HepG2 (cell line): ENCODE measurements at regions of chr20 and their contacts with region 1.

Region 1: DNA sequence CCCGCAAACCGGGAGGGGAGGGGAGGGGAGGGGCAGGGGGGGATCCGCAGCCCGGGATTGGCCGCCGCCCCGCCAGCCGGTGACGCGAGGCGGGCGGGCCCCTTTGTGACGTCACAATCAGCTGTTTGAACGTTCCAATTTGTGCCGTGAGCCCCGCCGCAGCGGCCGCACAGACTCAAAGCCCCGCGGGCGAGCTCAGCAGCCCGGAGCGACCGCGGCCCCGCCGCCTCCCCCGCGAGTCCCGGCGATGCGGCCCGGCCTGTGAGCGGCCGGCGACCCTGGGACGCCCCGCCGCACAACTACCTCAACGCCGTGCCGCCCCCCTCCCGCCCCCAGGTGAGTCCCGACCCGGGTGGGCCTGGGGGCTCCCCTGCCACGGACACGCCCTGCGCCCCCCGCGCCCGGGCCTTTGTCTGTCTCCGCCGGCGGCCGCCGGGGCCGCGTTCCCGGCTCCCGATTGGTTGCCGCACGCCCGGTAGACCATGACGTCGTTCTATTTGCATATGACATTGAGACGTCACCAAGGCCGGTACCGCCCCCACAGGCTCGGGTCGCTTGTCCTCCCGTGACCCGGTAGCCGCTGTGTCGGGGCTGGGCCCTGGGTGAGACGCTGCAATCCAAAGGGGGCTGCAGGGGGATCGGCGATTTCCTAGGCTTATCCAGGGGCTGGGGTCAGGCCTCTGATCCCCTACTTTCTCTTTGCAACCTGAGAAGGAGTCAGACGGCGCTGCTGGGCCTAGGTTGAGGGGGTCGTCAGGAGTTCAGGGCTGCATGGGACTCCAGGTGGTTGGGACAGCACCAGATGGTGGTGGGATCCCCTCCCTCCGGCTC is at the start of gene TP53INP2:
- DNase-seq: peak; percentile 94
- ATAC-seq: peak; percentile 70
- H3K4me3 ChIP-seq: peak within 1 kb of the TSS; percentile 82 to 98 (median 84)
- H3K27ac ChIP-seq: peak within 1 kb of the TSS; percentile 92
- H3K4me1 ChIP-seq: peaks cover 63% of the 10 kb centered on the region
- H3K27me3 ChIP-seq: no peaks in the 10 kb centered on the region; a peak in 1 of 5 replicates
- CTCF ChIP-seq: no peak
- EP300 ChIP-seq: peak; percentile 22 to 44; a peak in 3 of 4 replicates
- POLR2A ChIP-seq: peak; percentile 66 to 92
- RAD21 ChIP-seq: peak; percentile 39
- total RNA-seq, gene TP53INP2: 5.2 and 10.1 TPM in 2 replicates

Region 2: DNA sequence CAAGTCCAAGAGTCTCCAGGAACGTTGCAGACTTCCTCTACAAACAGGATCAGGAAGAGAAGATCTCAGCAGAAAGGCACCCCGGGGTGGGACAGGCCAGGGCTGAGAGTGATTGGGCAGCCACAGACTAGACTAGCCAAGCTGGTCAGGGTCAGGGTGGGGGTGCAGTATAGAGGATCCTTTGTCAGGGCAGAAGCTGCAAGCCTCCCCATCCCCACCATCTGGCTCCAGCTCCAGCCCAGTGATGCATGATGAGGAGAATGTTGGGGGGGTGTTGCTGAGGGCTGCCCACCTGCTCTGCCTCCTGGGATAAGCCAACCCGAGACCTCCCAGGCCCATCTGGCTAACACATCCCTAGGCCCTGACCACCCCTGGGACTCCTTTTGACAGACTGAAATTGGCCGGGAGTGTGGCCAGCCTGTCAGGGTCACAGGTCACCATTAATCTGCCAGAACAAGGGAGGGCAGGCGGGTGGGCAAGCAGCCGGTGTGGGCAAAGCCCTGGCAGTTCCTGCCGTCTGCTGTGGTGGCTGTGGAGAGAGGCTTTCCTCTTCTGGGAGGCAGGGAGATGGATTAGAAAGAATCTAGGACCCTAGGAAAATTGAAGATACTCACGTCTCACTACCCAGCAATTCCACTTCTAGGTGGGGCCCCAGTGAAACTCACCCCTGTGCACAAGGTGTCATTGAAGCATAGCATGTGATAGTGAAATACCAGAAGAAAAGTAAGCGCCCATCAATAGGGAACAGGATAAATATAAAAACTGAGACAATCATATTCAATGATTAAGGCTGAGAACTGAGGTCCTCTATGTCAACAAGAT is 1238.7 kb before region 1 on chr20:
- CTCF ChIA-PET with region 1: no interaction called
- POLR2A ChIA-PET with region 1: no interaction called
- in situ Hi-C with region 1: no loop called
- intact Hi-C with region 1: no loop called
- DNase-seq: peak; percentile 78
- ATAC-seq: peak; percentile 92
- H3K4me3 ChIP-seq: no peak overlapping the region; a peak in 1 of 6 replicates
- H3K27ac ChIP-seq: no peak overlapping the region
- H3K4me1 ChIP-seq: peaks cover 43% of the 10 kb centered on the region
- H3K27me3 ChIP-seq: peaks cover 0 to 4% of the 10 kb centered on the region in 2 experiments; a peak in 1 of 5 replicates
- CTCF ChIP-seq: no peak
- EP300 ChIP-seq: no peak
- POLR2A ChIP-seq: no peak
- RAD21 ChIP-seq: no peak

Region 3: GRCh38 chr20:34538671-34539123 is 165.7 kb before region 1 on chr20:
- CTCF ChIA-PET with region 1: interaction called, 4 read pairs
- POLR2A ChIA-PET with region 1: interaction called, 3 read pairs
- in situ Hi-C with region 1: no loop called
- intact Hi-C with region 1: loop called (anchors 5 kb)
- DNase-seq: peak; percentile 61
- ATAC-seq: peak; percentile 68
- H3K4me3 ChIP-seq: no peak overlapping the region
- H3K27ac ChIP-seq: no peak overlapping the region
- H3K4me1 ChIP-seq: peaks cover 9% of the 10 kb centered on the region
- H3K27me3 ChIP-seq: no peaks in the 10 kb centered on the region
- CTCF ChIP-seq: peak; percentile 99
- EP300 ChIP-seq: 0 out of 4 replicates have a peak, but pooled peaks of 1 of the 2 experiments have one; percentile 23
- POLR2A ChIP-seq: no peak
- RAD21 ChIP-seq: peak; percentile 82

Region 4: DNA sequence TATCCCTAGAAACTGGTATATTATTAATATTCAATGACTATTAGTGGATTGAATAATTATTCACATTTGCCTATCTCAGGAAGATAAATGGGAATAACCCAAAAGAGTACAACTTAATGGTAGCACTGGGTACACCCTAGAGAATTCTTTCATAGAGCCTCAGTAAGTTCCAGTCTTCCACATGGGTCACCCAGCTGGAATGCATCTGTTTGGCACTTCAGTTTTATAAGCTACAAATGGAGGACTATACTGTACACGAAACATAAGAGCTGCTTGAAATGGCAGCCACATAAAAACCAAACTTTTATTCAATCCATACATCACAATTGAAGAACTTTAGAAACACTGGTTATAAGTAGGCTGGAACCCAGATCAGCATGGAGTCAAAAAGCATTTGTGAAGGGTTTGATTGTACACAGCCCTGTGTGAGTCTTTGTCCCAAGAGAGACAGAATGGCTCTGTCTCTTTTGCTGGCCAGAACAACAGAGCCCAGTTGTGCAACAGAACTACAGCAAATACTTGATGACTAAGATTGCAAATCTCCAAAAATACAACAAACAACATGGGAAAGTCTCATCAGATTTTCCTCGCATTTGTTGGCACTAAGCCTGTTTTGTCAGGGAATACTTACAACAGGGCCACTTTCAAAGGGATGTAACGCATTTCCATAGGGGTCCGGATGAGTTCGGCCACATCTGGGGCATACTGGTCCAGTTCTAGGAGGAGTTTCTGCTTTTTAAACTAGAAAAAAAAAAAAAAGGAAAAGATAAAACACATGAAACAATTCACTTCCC is 67.0 kb before region 1 on chr20:
- CTCF ChIA-PET with region 1: no interaction called
- POLR2A ChIA-PET with region 1: interaction called, 6 read pairs
- in situ Hi-C with region 1: no loop called
- intact Hi-C with region 1: loop called (anchors 5 kb)
- DNase-seq: peak; percentile 90
- ATAC-seq: peak; percentile 85
- H3K4me3 ChIP-seq: no peak overlapping the region
- H3K27ac ChIP-seq: peak overlapping the region; percentile 54
- H3K4me1 ChIP-seq: peaks cover 57% of the 10 kb centered on the region
- H3K27me3 ChIP-seq: no peaks in the 10 kb centered on the region
- CTCF ChIP-seq: no peak
- EP300 ChIP-seq: peak; percentile 69 to 87; a peak in 3 of 4 replicates
- POLR2A ChIP-seq: no peak
- RAD21 ChIP-seq: no peak

Region 5: GRCh38 chr20:34689486-34689885 is 14.9 kb before region 1 on chr20:
- CTCF ChIA-PET with region 1: no interaction called
- POLR2A ChIA-PET with region 1: interaction called, 25 read pairs
- in situ Hi-C with region 1: no loop called
- intact Hi-C with region 1: no loop called
- DNase-seq: no peak
- ATAC-seq: peak; percentile 30; the same call in 1 of the 3 replicates
- H3K4me3 ChIP-seq: no peak overlapping the region
- H3K27ac ChIP-seq: no peak overlapping the region
- H3K4me1 ChIP-seq: peaks cover 18% of the 10 kb centered on the region
- H3K27me3 ChIP-seq: no peaks in the 10 kb centered on the region
- CTCF ChIP-seq: no peak
- EP300 ChIP-seq: peak in 1 of 2 experiments; percentile 38; a peak in 1 of 4 replicates
- POLR2A ChIP-seq: no peak
- RAD21 ChIP-seq: no peak